Activated B cell treated with CpG ODN at 0.5 μM for 24 hours (primary cell): ENCODE measurements at regions of chr12 and their contacts with region 1.

Region 1: DNA sequence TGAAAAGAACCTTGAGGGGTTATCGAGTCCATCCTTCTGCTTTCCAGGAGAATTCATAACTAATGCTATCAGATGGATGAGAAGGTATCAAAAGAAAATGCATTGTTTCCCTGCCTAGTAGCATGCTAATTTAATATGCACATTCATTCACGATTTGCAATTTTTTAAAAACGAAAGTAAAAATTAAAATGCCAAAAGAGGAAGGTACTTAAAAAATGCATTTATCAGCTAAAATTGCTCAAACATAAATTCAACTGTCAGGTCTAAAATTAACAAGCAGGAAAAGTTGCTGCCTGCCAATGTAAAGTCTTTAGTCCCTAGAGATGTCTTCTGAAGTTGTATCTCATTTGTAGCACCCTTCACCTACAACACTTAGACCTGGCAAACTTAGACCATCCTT is 7.9 kb downstream of the ATF7 start:
- DNase-seq: no peak
- ATAC-seq: no peak
- H3K4me3 Mint-ChIP-seq: peak overlapping the region; percentile 77
- H3K27ac Mint-ChIP-seq: peak overlapping the region; percentile 84
- H3K4me1 Mint-ChIP-seq: peaks cover 37% of the 10 kb centered on the region
- H3K27me3 Mint-ChIP-seq: no peaks in the 10 kb centered on the region
- CTCF ChIP-seq: no peak

Region 2: DNA sequence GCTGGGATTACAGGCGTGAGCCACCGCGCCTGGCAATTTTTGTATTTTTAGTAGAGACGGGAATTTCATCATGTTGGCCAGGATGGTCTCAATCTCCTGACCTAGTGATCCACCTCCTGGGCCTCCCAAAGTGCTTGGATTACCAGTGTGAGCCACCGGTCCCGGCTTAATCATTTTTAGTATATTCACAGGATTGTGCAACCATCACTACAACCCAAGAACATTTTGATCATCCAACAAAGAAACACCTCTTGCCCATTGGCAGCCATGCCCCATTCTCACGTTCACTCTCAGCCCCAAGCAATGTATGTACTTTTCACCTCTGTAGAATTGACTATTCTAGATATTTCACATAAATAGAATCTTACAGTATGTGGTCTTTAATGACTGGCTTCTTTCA is 218.4 kb before region 1 on chr12:
- CTCF ChIA-PET with region 1: no interaction called
- POLR2A ChIA-PET with region 1: no interaction called
- intact Hi-C with region 1: no loop called
- DNase-seq: no peak
- ATAC-seq: no peak
- H3K4me3 Mint-ChIP-seq: no peak overlapping the region
- H3K27ac Mint-ChIP-seq: peak overlapping the region; percentile 59
- H3K4me1 Mint-ChIP-seq: peaks cover 6% of the 10 kb centered on the region
- H3K27me3 Mint-ChIP-seq: no peaks in the 10 kb centered on the region
- CTCF ChIP-seq: no peak

Region 3: GRCh38 chr12:53476769-53477209 is 141.5 kb before region 1 on chr12:
- CTCF ChIA-PET with region 1: no interaction called
- POLR2A ChIA-PET with region 1: no interaction called
- intact Hi-C with region 1: no loop called
- DNase-seq: no peak
- ATAC-seq: peak; percentile 34
- H3K4me3 Mint-ChIP-seq: no peak overlapping the region
- H3K27ac Mint-ChIP-seq: no peak overlapping the region
- H3K4me1 Mint-ChIP-seq: peaks cover 2% of the 10 kb centered on the region
- H3K27me3 Mint-ChIP-seq: no peaks in the 10 kb centered on the region
- CTCF ChIP-seq: no peak

Region 4: GRCh38 chr12:53603804-53604203 is 14.5 kb before region 1 on chr12:
- CTCF ChIA-PET with region 1: no interaction called
- POLR2A ChIA-PET with region 1: no interaction called
- intact Hi-C with region 1: loop called (anchors 2 kb)
- DNase-seq: no peak
- ATAC-seq: no peak
- H3K4me3 Mint-ChIP-seq: no peak overlapping the region
- H3K27ac Mint-ChIP-seq: no peak overlapping the region
- H3K4me1 Mint-ChIP-seq: peaks cover 37% of the 10 kb centered on the region
- H3K27me3 Mint-ChIP-seq: no peaks in the 10 kb centered on the region
- CTCF ChIP-seq: no peak

Region 5: DNA sequence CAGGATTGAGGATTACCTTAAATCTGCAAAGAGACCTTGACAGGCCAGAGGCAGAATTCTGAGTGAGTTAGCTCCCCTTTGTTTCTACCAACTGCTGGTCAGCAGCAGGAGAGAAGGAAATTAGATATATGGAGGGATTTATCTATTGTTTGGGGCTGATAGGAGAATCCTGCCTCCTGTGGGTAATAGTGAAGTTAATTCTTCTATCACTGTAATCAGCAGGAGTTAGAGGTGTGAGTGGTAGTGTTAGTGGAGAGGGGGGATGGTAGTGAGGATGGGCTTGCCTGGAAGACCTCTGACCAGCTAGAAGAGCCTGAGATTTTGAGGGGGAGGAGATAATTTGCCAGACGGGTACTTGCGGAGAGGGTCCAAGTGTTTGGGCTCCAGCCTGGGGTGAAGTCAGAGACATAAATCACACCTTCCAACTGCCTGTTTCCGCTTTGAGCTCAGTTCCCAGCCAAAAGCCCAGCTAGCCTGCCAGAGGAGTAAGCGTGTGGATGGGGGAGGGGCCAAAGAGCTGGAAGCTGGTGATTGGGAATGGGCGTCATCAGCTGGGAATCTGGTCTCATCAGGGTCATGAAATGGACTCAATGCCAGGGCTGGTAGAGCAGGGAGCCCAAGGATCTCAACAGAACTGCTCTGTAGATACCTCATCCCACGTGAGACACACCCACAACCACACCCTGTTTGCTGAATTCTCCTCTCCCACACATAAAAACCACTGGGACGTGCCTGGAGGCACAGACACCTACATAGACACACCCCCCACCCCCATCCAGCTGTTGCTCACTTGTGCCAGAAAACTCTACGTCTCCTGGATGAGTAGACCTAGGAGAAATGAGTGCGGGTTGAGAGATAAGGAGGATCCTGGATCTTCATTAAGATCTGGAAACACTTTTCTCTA is 813.9 kb after region 1 on chr12:
- CTCF ChIA-PET with region 1: no interaction called
- POLR2A ChIA-PET with region 1: interaction called, 14 read pairs
- intact Hi-C with region 1: no loop called
- DNase-seq: no peak
- ATAC-seq: no peak
- H3K4me3 Mint-ChIP-seq: no peak overlapping the region
- H3K27ac Mint-ChIP-seq: no peak overlapping the region
- H3K4me1 Mint-ChIP-seq: peaks cover 9% of the 10 kb centered on the region
- H3K27me3 Mint-ChIP-seq: peaks cover 14% of the 10 kb centered on the region
- CTCF ChIP-seq: no peak